Right cardiac atrium (tissue), 5 donors: ENCODE measurements at regions of chr1 and their contacts with region 1.

Region 1: GRCh38 chr1:164772635-164773034 is 213.7 kb downstream of the PBX1 start:
- DNase-seq: peak; percentile 54 to 75 (median 66)
- ATAC-seq: peak; percentile 86 to 87
- H3K4me3 ChIP-seq: no peak overlapping the region
- H3K27ac ChIP-seq: peak overlapping the region; percentile 77
- H3K4me1 ChIP-seq: peaks cover 36% of the 10 kb centered on the region
- H3K27me3 ChIP-seq: no peaks in the 10 kb centered on the region

Region 2: DNA sequence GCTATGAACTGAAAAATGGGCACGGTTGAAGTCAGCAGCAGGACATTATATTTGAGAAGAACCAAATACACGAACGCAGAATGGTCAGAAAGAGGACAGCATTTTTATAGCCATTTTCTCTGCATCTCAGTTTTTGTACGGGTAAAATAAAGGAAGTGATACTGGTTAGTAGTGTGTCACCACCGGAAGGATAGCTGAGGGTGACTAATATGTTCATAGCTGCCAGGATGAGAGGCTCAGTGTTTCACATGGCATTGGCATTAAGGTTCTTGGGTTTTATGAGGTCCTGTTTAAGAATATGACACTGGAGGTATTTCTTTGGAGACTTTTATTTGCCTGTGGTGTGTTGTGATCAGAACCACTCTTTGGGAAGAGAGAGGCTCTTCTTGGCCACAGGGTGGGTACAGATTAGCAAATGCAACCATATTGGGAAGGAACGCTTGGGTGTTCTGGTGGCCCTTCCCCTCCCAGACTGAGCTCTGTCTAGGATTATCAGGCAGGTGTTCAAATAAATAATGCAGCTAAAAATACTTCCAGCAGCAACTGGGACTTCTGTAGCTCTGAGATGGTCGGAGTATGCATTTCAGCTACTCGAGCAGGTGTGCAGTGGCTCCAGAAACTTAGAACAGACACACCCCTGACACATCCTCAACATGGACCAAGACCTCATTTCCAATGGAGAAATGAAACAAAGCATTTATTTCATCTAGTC is 55.5 kb before region 1 on chr1:
- intact Hi-C with region 1: loop called in 1 of 4 experiments (anchors 10 kb)
- DNase-seq: no peak
- ATAC-seq: no peak
- H3K4me3 ChIP-seq: no peak overlapping the region
- H3K27ac ChIP-seq: no peak overlapping the region
- H3K4me1 ChIP-seq: peaks cover 21% of the 10 kb centered on the region
- H3K27me3 ChIP-seq: no peaks in the 10 kb centered on the region